A673 (cell line): ENCODE measurements at regions of chr6 and their contacts with region 1.

Region 1: DNA sequence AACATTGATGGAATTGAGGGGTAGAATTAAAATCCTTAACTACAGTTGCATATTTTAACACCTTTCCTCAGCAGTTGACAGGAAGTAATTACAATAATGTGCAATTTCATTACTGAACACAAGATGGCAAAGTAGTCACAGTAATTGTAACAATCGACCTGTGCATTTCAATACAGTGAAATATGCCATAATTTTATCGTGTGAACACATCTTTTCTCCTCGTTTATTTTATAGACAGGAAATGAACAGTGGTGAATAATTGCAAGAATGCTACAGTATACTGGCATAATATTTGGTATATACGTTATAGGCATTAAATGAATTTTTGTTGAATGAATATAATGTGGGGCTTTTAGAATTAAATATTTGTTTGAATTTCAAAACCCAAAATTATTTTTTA is 25.0 kb downstream of the CYB5R4 start:
- DNase-seq: peak; percentile 80
- H3K4me3 ChIP-seq: no peak overlapping the region
- H3K27ac ChIP-seq: no peak overlapping the region
- H3K4me1 ChIP-seq: peaks cover 18% of the 10 kb centered on the region
- H3K27me3 ChIP-seq: no peaks in the 10 kb centered on the region
- CTCF ChIP-seq: peak; percentile 79

Region 2: GRCh38 chr6:83708970-83709747 is 175.4 kb before region 1 on chr6 and contains the start of gene SNAP91:
- CTCF ChIA-PET with region 1: no interaction called
- POLR2A ChIA-PET with region 1: no interaction called
- intact Hi-C with region 1: no loop called
- DNase-seq: peak; percentile 53
- H3K4me3 ChIP-seq: peak within 1 kb of the TSS; percentile 58
- H3K27ac ChIP-seq: no peak within 1 kb of the TSS
- H3K4me1 ChIP-seq: peaks cover 3% of the 10 kb centered on the region
- H3K27me3 ChIP-seq: peaks cover 75% of the 10 kb centered on the region
- CTCF ChIP-seq: no peak
- total RNA-seq, gene SNAP91: 0.55 and 0.62 TPM in 2 replicates

Region 3: GRCh38 chr6:84227434-84228197 is 343.1 kb after region 1 on chr6 and contains the start of gene CEP162:
- CTCF ChIA-PET with region 1: no interaction called
- POLR2A ChIA-PET with region 1: no interaction called
- intact Hi-C with region 1: loop called (anchors 2 kb)
- DNase-seq: peak; percentile 93
- H3K4me3 ChIP-seq: peak within 1 kb of the TSS; percentile 74
- H3K27ac ChIP-seq: peak within 1 kb of the TSS; percentile 70
- H3K4me1 ChIP-seq: peaks cover 8% of the 10 kb centered on the region
- H3K27me3 ChIP-seq: peaks cover 12% of the 10 kb centered on the region
- CTCF ChIP-seq: peak; percentile 76
- total RNA-seq, gene CEP162: 12.1 and 15.9 TPM in 2 replicates

Region 4: GRCh38 chr6:84575264-84575663 is 690.7 kb after region 1 on chr6:
- CTCF ChIA-PET with region 1: no interaction called
- POLR2A ChIA-PET with region 1: no interaction called
- intact Hi-C with region 1: loop called (anchors 10 kb)
- DNase-seq: peak; percentile 72
- H3K4me3 ChIP-seq: no peak overlapping the region
- H3K27ac ChIP-seq: no peak overlapping the region
- H3K4me1 ChIP-seq: no peaks in the 10 kb centered on the region
- H3K27me3 ChIP-seq: no peaks in the 10 kb centered on the region
- CTCF ChIP-seq: no peak